Mammary epithelial cell (primary cell): ENCODE measurements at regions of chr10 and their contacts with region 1.

Region 1: GRCh38 chr10:4208499-4208898 is 423.5 kb upstream of the KLF6 start:
- DNase-seq: no peak
- H3K4me3 ChIP-seq: no peak overlapping the region
- H3K27ac ChIP-seq: no peak overlapping the region
- H3K4me1 ChIP-seq: peaks cover 6% of the 10 kb centered on the region
- H3K27me3 ChIP-seq: no peaks in the 10 kb centered on the region
- CTCF ChIP-seq: no peak

Region 2: GRCh38 chr10:4174197-4174596 is 34.3 kb before region 1 on chr10:
- CTCF ChIA-PET with region 1: no interaction called
- dilution Hi-C with region 1: no loop called
- in situ Hi-C with region 1: no loop called
- intact Hi-C with region 1: no loop called
- DNase-seq: no peak
- H3K4me3 ChIP-seq: no peak overlapping the region
- H3K27ac ChIP-seq: no peak overlapping the region
- H3K4me1 ChIP-seq: no peaks in the 10 kb centered on the region
- H3K27me3 ChIP-seq: no peaks in the 10 kb centered on the region
- CTCF ChIP-seq: peak in 1 of 2 donors; percentile 18

Region 3: DNA sequence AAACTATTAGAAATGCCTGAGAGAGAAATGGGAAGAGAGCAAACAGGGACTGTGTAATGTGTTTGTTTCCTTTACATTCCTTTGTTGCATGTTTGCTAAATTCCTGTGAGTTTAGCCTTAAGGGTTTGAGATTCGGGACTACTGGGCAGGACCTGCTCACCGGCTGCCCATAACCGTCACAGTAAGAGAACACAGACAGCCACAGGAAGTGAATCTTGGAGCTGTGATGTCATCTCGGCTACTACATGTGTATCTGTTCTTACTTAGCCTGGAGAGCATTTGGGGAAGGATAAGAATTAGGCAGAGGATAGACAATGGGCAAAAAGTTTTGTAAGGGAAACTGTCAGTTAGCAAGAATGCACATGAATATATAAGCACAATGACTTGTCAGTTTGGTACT is 61.6 kb after region 1 on chr10:
- CTCF ChIA-PET with region 1: no interaction called
- dilution Hi-C with region 1: no loop called
- in situ Hi-C with region 1: no loop called
- intact Hi-C with region 1: loop called (anchors 5 kb)
- DNase-seq: peak; percentile 75
- H3K4me3 ChIP-seq: no peak overlapping the region
- H3K27ac ChIP-seq: peak overlapping the region; percentile 10
- H3K4me1 ChIP-seq: peaks cover 18% of the 10 kb centered on the region
- H3K27me3 ChIP-seq: no peaks in the 10 kb centered on the region
- CTCF ChIP-seq: no peak